A673 (cell line): ENCODE measurements at regions of chr18 and their contacts with region 1.

Region 1: GRCh38 chr18:74029161-74029560 is 118.5 kb downstream of the FBXO15 start:
- DNase-seq: peak; percentile 61
- H3K4me3 ChIP-seq: no peak overlapping the region
- H3K27ac ChIP-seq: peak overlapping the region; percentile 55
- H3K4me1 ChIP-seq: no peaks in the 10 kb centered on the region
- H3K27me3 ChIP-seq: no peaks in the 10 kb centered on the region
- CTCF ChIP-seq: no peak

Region 2: DNA sequence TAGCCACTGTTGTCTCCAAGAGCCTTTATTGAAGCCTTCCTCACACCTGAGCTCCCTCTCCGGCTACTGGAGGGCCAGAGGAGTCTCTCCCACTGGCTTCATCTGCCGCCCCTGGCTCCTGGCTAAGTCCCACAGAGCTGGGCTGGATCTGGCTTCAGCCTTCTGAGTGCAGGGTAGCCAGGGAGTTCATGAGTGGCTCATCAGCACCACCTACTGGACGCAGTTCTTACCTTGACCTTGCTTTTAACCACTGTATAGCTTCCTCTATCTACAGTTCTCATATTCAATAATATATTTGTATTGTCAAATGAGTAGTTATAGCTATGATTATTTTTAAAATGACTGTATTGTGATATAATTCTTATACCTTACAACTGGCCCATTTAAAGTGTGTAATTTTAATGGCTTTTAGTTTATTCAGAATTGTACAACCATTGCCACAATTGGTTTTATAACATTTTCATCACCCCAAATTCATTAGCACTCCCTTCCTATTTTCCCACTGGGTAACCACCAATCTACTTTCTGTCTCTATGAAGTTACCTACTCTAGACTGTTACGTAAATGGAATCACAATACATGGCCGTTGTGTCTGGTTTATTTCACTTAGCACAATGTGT is 522.9 kb after region 1 on chr18:
- CTCF ChIA-PET with region 1: no interaction called
- POLR2A ChIA-PET with region 1: no interaction called
- intact Hi-C with region 1: loop called (anchors 5 kb)
- DNase-seq: peak; percentile 82
- H3K4me3 ChIP-seq: no peak overlapping the region
- H3K27ac ChIP-seq: no peak overlapping the region
- H3K4me1 ChIP-seq: no peaks in the 10 kb centered on the region
- H3K27me3 ChIP-seq: peaks cover 21% of the 10 kb centered on the region
- CTCF ChIP-seq: peak; percentile 83